Endothelial cell of umbilical vein (primary cell): ENCODE measurements at regions of chr1 and their contacts with region 1.

Region 1: DNA sequence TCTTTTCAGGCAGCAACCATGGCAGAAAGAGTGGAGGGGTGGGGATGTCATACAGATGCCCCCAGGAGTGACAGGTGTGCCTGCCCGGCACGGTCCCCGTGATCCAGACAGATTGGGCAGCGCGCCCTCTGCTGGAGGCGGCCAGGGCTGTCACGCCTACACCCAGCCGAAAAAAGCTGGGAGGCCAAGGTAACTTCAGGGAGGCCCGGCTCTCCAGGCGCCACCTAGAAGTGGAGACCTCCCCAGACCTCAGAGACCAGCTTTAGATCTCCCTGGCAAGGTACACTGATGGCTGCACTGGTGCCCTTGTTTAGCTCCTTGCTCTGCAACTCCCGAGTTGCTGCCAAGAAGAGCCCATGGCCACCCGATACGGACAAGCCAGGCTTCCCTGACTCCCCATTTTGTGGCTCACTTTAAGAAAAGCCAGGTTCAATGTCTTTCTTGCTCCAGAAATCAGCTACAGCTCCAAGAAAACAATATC is 6.6 kb downstream of the GOLT1A start:
- DNase-seq: peak; percentile 41
- H3K4me3 ChIP-seq: no peak overlapping the region
- H3K27ac ChIP-seq: no peak overlapping the region
- H3K4me1 ChIP-seq: no peaks in the 10 kb centered on the region
- H3K27me3 ChIP-seq: no peaks in the 10 kb centered on the region
- CTCF ChIP-seq: peak; percentile 89 to 97
- POLR2A ChIP-seq: no peak

Region 2: GRCh38 chr1:203861379-203862184 is 345.6 kb before region 1 on chr1 and contains the start of gene SNRPE:
- CTCF ChIA-PET with region 1: interaction called, 20 read pairs
- POLR2A ChIA-PET with region 1: no interaction called
- dilution Hi-C with region 1: no loop called
- intact Hi-C with region 1: loop called (anchors 1 kb)
- DNase-seq: peak; percentile 99
- H3K4me3 ChIP-seq: peak within 1 kb of the TSS; percentile 67 to 99 (median 94)
- H3K27ac ChIP-seq: peak within 1 kb of the TSS; percentile 71
- H3K4me1 ChIP-seq: peaks cover 23% of the 10 kb centered on the region
- H3K27me3 ChIP-seq: no peaks in the 10 kb centered on the region
- CTCF ChIP-seq: peak; percentile 92 to 95
- POLR2A ChIP-seq: peak; percentile 84
- total RNA-seq, gene SNRPE: 199 and 219 TPM in 2 replicates

Region 3: GRCh38 chr1:204025917-204026707 is 181.1 kb before region 1 on chr1:
- CTCF ChIA-PET with region 1: no interaction called
- POLR2A ChIA-PET with region 1: no interaction called
- dilution Hi-C with region 1: no loop called
- intact Hi-C with region 1: no loop called
- DNase-seq: no peak
- H3K4me3 ChIP-seq: no peak overlapping the region
- H3K27ac ChIP-seq: no peak overlapping the region
- H3K4me1 ChIP-seq: no peaks in the 10 kb centered on the region
- H3K27me3 ChIP-seq: peaks cover 3 to 24% of the 10 kb centered on the region in 2 experiments
- CTCF ChIP-seq: no peak
- POLR2A ChIP-seq: no peak

Region 4: GRCh38 chr1:204045430-204045829 is 161.7 kb before region 1 on chr1:
- CTCF ChIA-PET with region 1: no interaction called
- POLR2A ChIA-PET with region 1: no interaction called
- dilution Hi-C with region 1: no loop called
- intact Hi-C with region 1: no loop called
- DNase-seq: peak; percentile 60
- H3K4me3 ChIP-seq: no peak overlapping the region
- H3K27ac ChIP-seq: peak overlapping the region; percentile 53
- H3K4me1 ChIP-seq: peaks cover 12% of the 10 kb centered on the region
- H3K27me3 ChIP-seq: no peaks in the 10 kb centered on the region
- CTCF ChIP-seq: no peak
- POLR2A ChIP-seq: no peak

Region 5: GRCh38 chr1:204151552-204152309 is 55.4 kb before region 1 on chr1 and contains the start of gene ETNK2:
- CTCF ChIA-PET with region 1: interaction called, 29 read pairs
- POLR2A ChIA-PET with region 1: no interaction called
- dilution Hi-C with region 1: no loop called
- intact Hi-C with region 1: no loop called
- DNase-seq: peak; percentile 61
- H3K4me3 ChIP-seq: peak within 1 kb of the TSS; percentile 20 to 78 (median 53)
- H3K27ac ChIP-seq: no peak within 1 kb of the TSS
- H3K4me1 ChIP-seq: peaks cover 5% of the 10 kb centered on the region
- H3K27me3 ChIP-seq: no peaks in the 10 kb centered on the region
- CTCF ChIP-seq: no peak
- POLR2A ChIP-seq: no peak
- total RNA-seq, gene ETNK2: 13.5 and 15.5 TPM in 2 replicates

Region 6: DNA sequence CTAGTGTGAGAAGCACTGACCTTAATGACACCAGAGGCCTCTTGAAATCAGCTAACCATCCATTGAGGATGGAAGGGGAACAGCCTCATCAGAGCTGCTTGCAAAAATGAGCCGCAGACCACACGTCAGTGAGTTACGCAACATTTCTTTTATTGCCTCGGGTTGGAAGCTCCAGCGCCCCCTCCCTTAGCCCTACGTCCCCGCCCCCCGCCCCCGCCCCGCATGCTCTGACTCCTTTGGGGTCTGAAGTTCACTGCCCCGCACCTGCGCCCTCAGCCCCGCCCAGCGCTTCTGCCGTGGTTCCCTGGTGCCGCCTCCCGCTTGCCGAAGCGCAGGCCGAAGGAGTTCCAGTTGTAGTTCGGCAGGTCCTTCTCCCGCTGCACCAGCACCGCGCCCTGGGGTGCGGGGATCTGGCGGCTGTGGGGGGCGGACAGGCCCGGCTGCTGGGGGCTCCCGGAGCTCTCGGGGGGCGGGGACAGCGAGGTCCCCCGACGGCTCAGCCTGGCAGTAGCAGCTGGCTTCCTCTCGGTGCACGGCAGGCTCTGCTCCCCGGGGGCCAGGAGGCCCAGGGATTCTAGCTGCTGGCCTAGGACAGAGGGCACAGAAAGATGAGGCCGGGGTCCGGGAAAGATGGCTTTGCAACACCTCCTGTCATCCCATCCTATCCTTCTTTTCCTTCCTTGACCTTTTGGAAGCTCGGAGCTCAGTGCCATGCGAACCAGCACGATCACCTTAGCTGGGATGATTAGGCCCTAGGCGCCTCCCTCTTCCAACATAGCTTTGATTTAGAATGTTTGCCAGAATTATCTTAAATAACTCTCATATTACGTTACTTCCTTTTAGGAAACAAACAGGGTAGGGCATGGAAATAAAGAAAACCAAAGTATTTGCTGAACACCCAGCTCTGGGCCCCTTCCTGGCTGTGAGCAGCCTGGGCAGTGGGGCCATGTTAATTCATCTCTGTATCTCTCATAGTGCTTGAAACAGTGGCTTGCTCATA is 16.7 kb before region 1 on chr1:
- CTCF ChIA-PET with region 1: interaction called, 85 read pairs
- POLR2A ChIA-PET with region 1: interaction called, 4 read pairs
- dilution Hi-C with region 1: no loop called
- intact Hi-C with region 1: loop called (anchors 1 kb)
- DNase-seq: peak; percentile 81
- H3K4me3 ChIP-seq: no peak overlapping the region
- H3K27ac ChIP-seq: peak overlapping the region; percentile 90
- H3K4me1 ChIP-seq: peaks cover 32% of the 10 kb centered on the region
- H3K27me3 ChIP-seq: no peaks in the 10 kb centered on the region
- CTCF ChIP-seq: no peak
- POLR2A ChIP-seq: peak; percentile 52

Region 7: DNA sequence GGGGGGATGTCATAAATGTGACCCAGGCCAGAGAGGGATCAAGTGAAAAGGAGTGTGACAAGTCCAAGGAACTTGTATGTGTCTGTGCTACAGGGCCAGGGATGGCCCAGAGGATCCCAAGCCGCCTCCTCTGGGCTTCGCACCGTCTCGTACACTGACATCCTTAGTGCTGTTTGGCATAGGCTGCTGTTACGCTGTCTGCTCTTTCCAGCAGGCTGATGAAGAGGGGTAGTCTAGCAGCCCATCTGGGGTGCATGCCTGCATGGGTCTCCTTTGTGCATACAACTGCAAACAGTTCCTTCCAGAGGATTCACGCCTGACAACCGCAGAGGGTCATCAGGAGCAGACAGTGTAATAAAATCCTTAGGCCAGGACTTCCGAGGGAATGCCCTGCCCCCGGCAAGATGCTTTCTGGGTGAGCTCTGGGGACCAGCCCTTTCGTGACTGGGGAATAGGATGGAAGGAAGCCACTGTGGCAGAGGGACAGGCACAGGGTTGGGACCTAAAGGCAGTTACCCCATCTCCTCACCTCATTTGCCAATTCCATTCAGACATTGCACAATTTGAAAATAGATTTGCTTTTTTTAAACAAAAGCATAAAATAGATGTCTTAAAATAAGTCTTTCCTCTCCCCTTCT is 12.9 kb after region 1 on chr1:
- CTCF ChIA-PET with region 1: interaction called, 38 read pairs
- POLR2A ChIA-PET with region 1: no interaction called
- dilution Hi-C with region 1: no loop called
- intact Hi-C with region 1: no loop called
- DNase-seq: no peak
- H3K4me3 ChIP-seq: no peak overlapping the region
- H3K27ac ChIP-seq: no peak overlapping the region
- H3K4me1 ChIP-seq: no peaks in the 10 kb centered on the region
- H3K27me3 ChIP-seq: no peaks in the 10 kb centered on the region
- CTCF ChIP-seq: no peak
- POLR2A ChIP-seq: no peak

Region 8: GRCh38 chr1:204232526-204232925 is 25.4 kb after region 1 on chr1:
- CTCF ChIA-PET with region 1: interaction called, 25 read pairs
- POLR2A ChIA-PET with region 1: no interaction called
- dilution Hi-C with region 1: no loop called
- intact Hi-C with region 1: no loop called
- DNase-seq: no peak
- H3K4me3 ChIP-seq: no peak overlapping the region
- H3K27ac ChIP-seq: no peak overlapping the region
- H3K4me1 ChIP-seq: no peaks in the 10 kb centered on the region
- H3K27me3 ChIP-seq: no peaks in the 10 kb centered on the region
- CTCF ChIP-seq: no peak
- POLR2A ChIP-seq: no peak

Region 9: GRCh38 chr1:204565617-204566582 is 358.7 kb after region 1 on chr1:
- CTCF ChIA-PET with region 1: no interaction called
- POLR2A ChIA-PET with region 1: no interaction called
- dilution Hi-C with region 1: no loop called
- intact Hi-C with region 1: no loop called
- DNase-seq: peak; percentile 75
- H3K4me3 ChIP-seq: no peak overlapping the region
- H3K27ac ChIP-seq: no peak overlapping the region
- H3K4me1 ChIP-seq: no peaks in the 10 kb centered on the region
- H3K27me3 ChIP-seq: no peaks in the 10 kb centered on the region
- CTCF ChIP-seq: peak; percentile 64 to 71
- POLR2A ChIP-seq: no peak